Heart right ventricle (tissue), 16 donors: ENCODE measurements at regions of chr2 and their contacts with region 1.

Region 1: GRCh38 chr2:62178741-62179271 is 17.1 kb upstream of the B3GNT2 start:
- DNase-seq: peak in 1 of 2 donors; percentile 44
- ATAC-seq: peak; percentile 57 to 93 (median 80)
- H3K4me3 ChIP-seq: no peak overlapping the region
- H3K27ac ChIP-seq: peak overlapping the region in 7 of 10 donors; percentile 2 to 72 (median 59)
- H3K4me1 ChIP-seq: peaks cover 0 to 50% (median 17%) of the 10 kb centered on the region in 9 donors
- H3K27me3 ChIP-seq: no peaks in the 10 kb centered on the region
- CTCF ChIP-seq: no peak

Region 2: DNA sequence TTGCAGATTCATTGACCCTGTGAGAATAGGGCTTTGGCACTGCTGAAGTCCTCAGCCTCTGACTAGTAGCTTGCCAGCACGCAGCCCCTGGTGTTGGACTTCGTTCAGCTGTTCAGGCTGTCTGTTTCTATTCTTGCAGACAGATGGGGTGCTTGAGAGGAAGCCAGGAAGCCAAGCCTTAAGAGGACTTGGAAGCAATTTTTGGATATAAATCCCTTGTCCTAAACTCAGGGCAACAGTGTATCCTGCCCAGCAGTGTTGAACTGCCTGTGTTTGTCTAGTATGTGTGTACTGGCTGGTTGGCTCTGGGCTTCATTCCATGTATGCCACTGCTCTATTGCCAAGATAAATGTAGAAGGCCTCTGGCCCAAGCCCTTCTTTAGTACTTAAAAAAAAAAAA is 164.7 kb before region 1 on chr2:
- intact Hi-C with region 1: loop called in 1 of 10 experiments (anchors 10 kb)
- DNase-seq: peak; percentile 62 to 82
- ATAC-seq: peak; percentile 89 to 99 (median 97)
- H3K4me3 ChIP-seq: no peak overlapping the region
- H3K27ac ChIP-seq: peak overlapping the region in 7 of 10 donors; percentile 5 to 65 (median 55)
- H3K4me1 ChIP-seq: peaks cover 4 to 34% (median 23%) of the 10 kb centered on the region in 9 donors
- H3K27me3 ChIP-seq: no peaks in the 10 kb centered on the region
- CTCF ChIP-seq: peak in 7 of 9 donors; percentile 35 to 67 (median 51)

Region 3: GRCh38 chr2:62055724-62056336 is 123.0 kb before region 1 on chr2:
- intact Hi-C with region 1: no loop called
- DNase-seq: no peak
- ATAC-seq: no peak
- H3K4me3 ChIP-seq: no peak overlapping the region
- H3K27ac ChIP-seq: no peak overlapping the region
- H3K4me1 ChIP-seq: peaks cover 0 to 13% (median 0%) of the 10 kb centered on the region in 9 donors
- H3K27me3 ChIP-seq: no peaks in the 10 kb centered on the region
- CTCF ChIP-seq: no peak

Region 4: DNA sequence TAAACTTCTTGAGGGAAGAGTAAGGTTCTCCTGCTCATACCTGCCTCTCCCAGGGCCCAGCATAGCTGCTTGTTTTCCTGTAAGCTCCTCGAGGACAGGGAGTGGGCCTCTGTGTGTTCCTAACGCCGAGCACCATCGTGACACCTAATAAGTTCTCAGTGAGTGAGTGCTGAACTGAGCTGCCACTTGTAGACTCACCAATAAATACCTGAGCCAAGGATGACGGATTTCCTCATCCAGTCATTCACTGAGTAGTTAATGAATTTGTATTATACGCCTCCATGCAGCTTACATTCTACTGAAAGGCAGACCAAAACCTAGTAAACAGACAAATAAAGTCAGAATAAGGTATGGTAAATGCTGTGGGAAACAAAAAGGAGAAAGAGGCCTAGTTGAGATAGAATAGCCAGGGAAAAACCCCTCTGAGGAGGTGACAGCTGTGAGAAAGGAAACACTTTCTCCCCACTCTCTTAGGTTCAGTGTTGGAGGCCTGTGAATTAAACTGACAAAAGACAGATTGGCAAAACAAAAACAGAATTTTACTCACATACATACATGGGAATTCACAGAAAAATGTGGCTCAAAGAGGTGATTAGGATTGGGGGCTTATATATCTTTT is 155.7 kb after region 1 on chr2:
- intact Hi-C with region 1: loop called in 1 of 10 experiments (anchors 1 kb)
- DNase-seq: no peak
- ATAC-seq: no peak
- H3K4me3 ChIP-seq: no peak overlapping the region
- H3K27ac ChIP-seq: no peak overlapping the region
- H3K4me1 ChIP-seq: peaks cover 0 to 3% (median 0%) of the 10 kb centered on the region in 9 donors
- H3K27me3 ChIP-seq: no peaks in the 10 kb centered on the region
- CTCF ChIP-seq: no peak